Posterior vena cava (tissue), 2 donors: ENCODE measurements at regions of chr1 and their contacts with region 1.

Region 1: GRCh38 chr1:111399792-111400610 is 27.5 kb downstream of the OVGP1 start:
- DNase-seq: no peak

Region 2: GRCh38 chr1:111222308-111223125 is 177.5 kb before region 1 on chr1:
- intact Hi-C with region 1: loop called (anchors 5 to 10 kb)
- DNase-seq: peak; percentile 93

Region 3: GRCh38 chr1:111471012-111471411 is 71.0 kb after region 1 on chr1:
- intact Hi-C with region 1: no loop called
- DNase-seq: no peak